ENCODE measurements at regions of chr18 and their contacts with region 1.

Region 1: DNA sequence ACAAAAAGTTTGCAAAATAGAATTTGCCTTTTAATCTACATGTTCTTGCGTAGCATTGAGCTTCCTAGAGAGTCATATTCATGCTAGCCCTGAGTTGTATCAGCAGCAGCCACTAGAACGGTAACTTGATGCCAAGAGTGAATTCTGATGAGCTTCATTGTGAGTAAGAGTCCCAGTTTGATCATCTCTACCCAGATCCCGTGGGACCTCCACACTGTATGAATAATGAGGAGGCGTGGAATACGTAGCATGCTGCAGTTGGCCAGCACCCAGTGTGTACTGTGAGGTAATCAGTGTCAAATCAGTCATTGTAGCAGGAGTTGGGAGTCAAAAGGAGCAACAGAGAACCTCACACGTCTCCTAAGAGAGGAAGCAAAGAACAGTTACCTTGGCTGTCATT is 197.9 kb downstream of the NEDD4L start:
- DNase-seq: peak in 1 of 5 donors; percentile 46
- ATAC-seq: peak; percentile 51 to 85 (median 62)
- H3K4me3 ChIP-seq: no peak overlapping the region
- H3K27ac ChIP-seq: no peak overlapping the region
- H3K4me1 ChIP-seq: peaks cover 0 to 19% (median 10%) of the 10 kb centered on the region in 12 donors
- H3K27me3 ChIP-seq: no peaks in the 10 kb centered on the region
- CTCF ChIP-seq: no peak
- POLR2A ChIP-seq: no peak

Region 2: GRCh38 chr18:58195278-58195765 is 46.6 kb before region 1 on chr18:
- intact Hi-C with region 1: loop called in 1 of 10 experiments (anchors 10 kb)
- DNase-seq: peak in 1 of 5 donors; percentile 57
- ATAC-seq: peak in 3 of 4 donors; percentile 18 to 60 (median 59)
- H3K4me3 ChIP-seq: peak overlapping the region in 11 of 12 donors; percentile 17 to 64 (median 49)
- H3K27ac ChIP-seq: peak overlapping the region in 3 of 12 donors; percentile 30 to 78 (median 31)
- H3K4me1 ChIP-seq: peaks cover 0 to 26% (median 4%) of the 10 kb centered on the region in 12 donors
- H3K27me3 ChIP-seq: peaks cover 0 to 5% (median 0%) of the 10 kb centered on the region in 9 donors
- CTCF ChIP-seq: no peak
- POLR2A ChIP-seq: no peak

Measured in heart left ventricle (tissue), 16 donors.